HepG2 (cell line): ENCODE measurements at regions of chr17 and their contacts with region 1.

Region 1: GRCh38 chr17:45894022-45894784 is at the start of gene MAPT:
- DNase-seq: peak; percentile 83
- ATAC-seq: peak; percentile 89
- H3K4me3 ChIP-seq: peak within 1 kb of the TSS; percentile 75 to 87 (median 84)
- H3K27ac ChIP-seq: no peak within 1 kb of the TSS
- H3K4me1 ChIP-seq: peaks cover 38% of the 10 kb centered on the region
- H3K27me3 ChIP-seq: peaks cover 6 to 47% of the 10 kb centered on the region in 2 experiments
- CTCF ChIP-seq: peak; percentile 86
- EP300 ChIP-seq: no peak
- POLR2A ChIP-seq: peak; percentile 34 to 65; a peak in 3 of 4 replicates
- RAD21 ChIP-seq: peak; percentile 96
- total RNA-seq, gene MAPT: 2.1 and 3.6 TPM in 2 replicates

Region 2: GRCh38 chr17:45812102-45812501 is 82.1 kb before region 1 on chr17:
- CTCF ChIA-PET with region 1: no interaction called
- POLR2A ChIA-PET with region 1: no interaction called
- in situ Hi-C with region 1: no loop called
- intact Hi-C with region 1: no loop called
- DNase-seq: peak; percentile 29
- ATAC-seq: peak; percentile 24; the same call in 2 of the 3 replicates
- H3K4me3 ChIP-seq: no peak overlapping the region
- H3K27ac ChIP-seq: no peak overlapping the region
- H3K4me1 ChIP-seq: peaks cover 23% of the 10 kb centered on the region
- H3K27me3 ChIP-seq: peaks cover 7 to 61% of the 10 kb centered on the region in 2 experiments
- CTCF ChIP-seq: peak; percentile 32
- EP300 ChIP-seq: no peak
- POLR2A ChIP-seq: no peak
- RAD21 ChIP-seq: no peak

Region 3: DNA sequence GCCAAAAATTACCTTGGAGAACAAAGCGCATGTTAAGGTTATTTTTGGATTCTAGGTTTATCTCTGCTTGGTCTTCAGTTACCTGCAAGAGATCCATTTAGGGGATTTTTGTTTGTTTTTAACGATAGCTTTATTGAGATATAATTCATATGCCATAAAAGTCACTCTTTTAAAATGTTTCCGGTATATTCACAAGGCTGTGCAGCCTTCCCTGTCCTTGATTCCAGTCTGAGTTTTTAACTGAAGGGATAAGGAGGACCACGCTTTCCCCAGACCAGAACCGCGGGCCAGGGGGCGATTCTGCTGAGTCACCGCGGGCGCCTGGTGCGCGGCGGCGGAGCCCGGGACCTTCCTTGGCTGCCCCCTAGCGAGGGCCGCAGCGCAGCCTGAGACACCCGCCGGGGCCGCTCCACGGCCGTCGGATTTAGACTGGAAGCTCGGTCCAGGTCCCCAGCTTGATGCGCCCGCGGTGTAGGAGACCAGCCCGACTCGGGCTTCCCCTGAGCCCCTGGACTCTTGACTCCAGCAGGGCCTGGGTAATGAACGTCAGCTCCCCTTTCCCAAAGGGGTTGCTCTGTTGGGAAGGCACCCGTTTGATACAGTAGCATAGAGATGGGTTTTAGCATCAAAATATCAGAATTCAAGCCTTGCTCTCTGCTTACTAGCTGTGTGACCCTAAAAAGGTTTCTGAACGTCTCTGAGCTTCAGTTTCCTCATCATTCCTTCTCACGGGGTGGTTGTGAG is 54.9 kb after region 1 on chr17:
- CTCF ChIA-PET with region 1: interaction called, 13 read pairs
- POLR2A ChIA-PET with region 1: no interaction called
- in situ Hi-C with region 1: no loop called
- intact Hi-C with region 1: loop called (anchors 10 kb)
- DNase-seq: peak; percentile 61
- ATAC-seq: peak; percentile 98
- H3K4me3 ChIP-seq: peak overlapping the region in 2 of 3 experiments; percentile 12 to 49; a peak in 3 of 6 replicates
- H3K27ac ChIP-seq: peak overlapping the region; percentile 41
- H3K4me1 ChIP-seq: peaks cover 15% of the 10 kb centered on the region
- H3K27me3 ChIP-seq: peaks cover 4 to 12% of the 10 kb centered on the region in 2 experiments; a peak in 4 of 5 replicates
- CTCF ChIP-seq: peak; percentile 95
- EP300 ChIP-seq: peak; percentile 25 to 69; a peak in 2 of 4 replicates
- POLR2A ChIP-seq: no peak
- RAD21 ChIP-seq: peak; percentile 99